IMR-90 (cell line): ENCODE measurements at regions of chr17 and their contacts with region 1.

Region 1: GRCh38 chr17:37305406-37305905 is 70.3 kb upstream of the C17orf78 start:
- DNase-seq: no peak
- ATAC-seq: no peak
- H3K4me3 ChIP-seq: no peak overlapping the region
- H3K27ac ChIP-seq: no peak overlapping the region
- H3K4me1 ChIP-seq: no peaks in the 10 kb centered on the region
- H3K27me3 ChIP-seq: no peaks in the 10 kb centered on the region
- CTCF ChIP-seq: no peak
- POLR2A ChIP-seq: no peak
- RAD21 ChIP-seq: no peak

Region 2: GRCh38 chr17:37273409-37274051 is 31.9 kb before region 1 on chr17:
- CTCF ChIA-PET with region 1: no interaction called
- POLR2A ChIA-PET with region 1: no interaction called
- dilution Hi-C with region 1: no loop called
- in situ Hi-C with region 1: no loop called
- intact Hi-C with region 1: loop called (anchors 5 kb)
- DNase-seq: peak; percentile 84
- ATAC-seq: peak; percentile 99
- H3K4me3 ChIP-seq: no peak overlapping the region
- H3K27ac ChIP-seq: no peak overlapping the region
- H3K4me1 ChIP-seq: no peaks in the 10 kb centered on the region; the same call in 1 of the 2 replicates
- H3K27me3 ChIP-seq: no peaks in the 10 kb centered on the region
- CTCF ChIP-seq: no peak
- POLR2A ChIP-seq: no peak
- RAD21 ChIP-seq: no peak

Region 3: DNA sequence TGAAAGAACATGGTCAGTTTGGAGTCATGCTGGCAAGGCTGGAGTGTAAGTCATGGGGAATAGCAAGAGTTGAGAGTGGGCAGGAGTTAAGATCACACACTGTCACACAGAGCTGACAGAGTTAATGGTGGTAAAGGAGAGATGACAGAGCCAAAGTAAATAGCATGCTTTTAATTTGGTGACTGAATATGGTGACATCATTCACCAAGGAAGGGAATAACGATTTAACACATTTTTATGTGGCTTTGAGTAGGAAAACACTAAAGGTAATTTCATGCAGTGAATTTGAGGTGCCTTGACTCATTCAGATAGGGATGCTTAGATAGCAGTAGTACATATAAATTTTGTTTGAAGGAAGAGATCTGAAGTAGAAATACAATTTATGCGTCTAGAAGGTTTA is 261.7 kb after region 1 on chr17:
- CTCF ChIA-PET with region 1: no interaction called
- POLR2A ChIA-PET with region 1: no interaction called
- dilution Hi-C with region 1: no loop called
- in situ Hi-C with region 1: no loop called
- intact Hi-C with region 1: no loop called
- DNase-seq: no peak
- ATAC-seq: no peak
- H3K4me3 ChIP-seq: no peak overlapping the region
- H3K27ac ChIP-seq: no peak overlapping the region
- H3K4me1 ChIP-seq: no peaks in the 10 kb centered on the region; the same call in 1 of the 2 replicates
- H3K27me3 ChIP-seq: no peaks in the 10 kb centered on the region
- CTCF ChIP-seq: no peak
- POLR2A ChIP-seq: no peak
- RAD21 ChIP-seq: no peak

Region 4: DNA sequence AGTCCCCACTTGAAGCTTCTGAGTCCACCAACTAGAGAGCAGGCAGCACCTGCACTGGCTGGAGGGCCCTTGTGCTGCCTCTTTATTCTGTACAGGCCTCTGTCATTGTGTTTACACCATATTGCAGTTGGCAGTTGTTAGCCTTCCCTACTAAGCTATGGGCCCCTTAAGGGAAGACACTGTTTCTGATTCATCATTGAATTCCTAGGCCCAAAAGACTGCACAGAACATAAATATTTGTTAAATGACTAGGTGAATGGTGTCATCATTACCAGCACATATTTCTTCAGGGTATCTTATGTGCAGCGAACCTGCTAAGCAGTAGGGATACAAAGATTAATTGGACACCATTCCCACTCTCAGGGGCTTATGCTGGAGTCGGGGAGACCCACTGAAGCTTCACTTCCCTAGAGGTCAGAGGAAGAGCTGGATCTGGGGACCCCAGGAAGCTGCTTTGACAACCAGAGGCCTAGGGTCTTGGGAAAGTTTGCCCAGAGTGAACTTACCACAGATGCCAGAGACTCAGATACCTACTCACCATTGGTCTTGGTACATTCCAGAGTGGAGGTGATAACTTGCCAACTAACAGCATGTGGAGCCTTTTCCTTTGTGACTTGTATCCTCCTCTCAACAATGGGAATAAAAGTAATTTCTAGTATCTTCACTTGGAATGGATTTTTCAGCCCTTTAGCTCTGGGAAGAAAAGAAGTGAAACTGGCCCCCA is 366.5 kb after region 1 on chr17:
- CTCF ChIA-PET with region 1: no interaction called
- POLR2A ChIA-PET with region 1: no interaction called
- dilution Hi-C with region 1: no loop called
- in situ Hi-C with region 1: no loop called
- intact Hi-C with region 1: no loop called
- DNase-seq: peak; percentile 96
- ATAC-seq: peak; percentile 96
- H3K4me3 ChIP-seq: no peak overlapping the region
- H3K27ac ChIP-seq: peak overlapping the region; percentile 47
- H3K4me1 ChIP-seq: peaks cover 22% of the 10 kb centered on the region
- H3K27me3 ChIP-seq: no peaks in the 10 kb centered on the region
- CTCF ChIP-seq: no peak
- POLR2A ChIP-seq: no peak
- RAD21 ChIP-seq: no peak